Heart left ventricle (tissue), 16 donors: ENCODE measurements at regions of chr2 and their contacts with region 1.

Region 1: DNA sequence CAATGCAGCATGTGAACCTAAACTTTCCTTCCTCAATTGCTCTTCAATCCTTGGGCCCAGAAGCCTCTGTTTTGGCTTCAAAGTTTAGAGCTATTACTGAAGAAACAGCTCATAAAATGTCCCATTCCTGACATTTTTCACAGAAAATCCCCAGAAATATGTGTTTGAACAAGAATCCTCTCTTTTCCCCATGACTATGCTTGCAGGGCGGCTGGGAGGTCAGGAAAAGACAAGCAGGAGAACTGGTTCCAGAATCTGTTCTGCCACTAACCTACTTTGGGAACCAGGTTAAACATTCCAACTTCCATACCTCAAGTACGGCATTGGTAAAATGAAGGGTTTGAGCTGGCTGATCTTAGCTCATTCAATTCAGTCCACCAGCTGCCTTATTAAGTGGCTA is 87.9 kb upstream of the OSR1 start:
- DNase-seq: no peak
- ATAC-seq: no peak
- H3K4me3 ChIP-seq: no peak overlapping the region
- H3K27ac ChIP-seq: no peak overlapping the region
- H3K4me1 ChIP-seq: no peaks in the 10 kb centered on the region
- H3K27me3 ChIP-seq: no peaks in the 10 kb centered on the region
- CTCF ChIP-seq: no peak
- POLR2A ChIP-seq: no peak

Region 2: DNA sequence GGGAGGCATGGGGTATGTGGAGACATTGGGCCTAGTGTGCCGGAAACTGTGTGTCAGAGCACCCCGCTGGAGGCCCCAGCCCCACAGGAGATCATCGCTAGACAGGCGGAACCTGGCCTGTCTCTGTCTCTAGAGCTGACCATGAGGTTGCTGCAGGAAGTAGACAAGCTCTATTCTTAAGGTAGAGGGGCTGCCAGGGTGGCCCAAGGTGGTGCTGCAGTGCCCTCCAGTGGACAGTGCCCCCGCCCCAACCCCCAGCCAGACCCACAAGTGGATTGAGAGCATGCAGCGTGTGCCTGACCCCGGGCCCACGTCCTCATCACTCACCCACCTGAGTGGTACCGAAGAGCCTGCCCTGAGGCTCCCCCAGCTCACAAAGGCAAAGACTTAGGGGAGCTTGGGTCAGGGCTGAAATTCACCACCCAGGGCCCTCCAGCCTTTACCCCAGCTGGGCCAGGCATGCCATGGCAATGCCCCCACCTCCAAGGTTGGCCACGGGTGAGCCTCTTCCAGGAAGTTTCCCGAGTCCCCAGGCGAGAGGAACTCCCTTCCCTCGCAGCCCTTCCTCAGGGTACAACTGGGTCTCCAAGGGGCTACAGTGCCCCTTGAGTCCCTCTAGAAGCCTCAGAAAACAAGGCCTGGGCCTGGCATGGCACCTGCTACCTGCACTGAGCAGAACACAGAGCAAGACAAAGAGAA is 300.4 kb after region 1 on chr2:
- intact Hi-C with region 1: loop called in 1 of 10 experiments (anchors 5 kb)
- DNase-seq: peak in 1 of 5 donors; percentile 52
- ATAC-seq: peak in 3 of 4 donors; percentile 52 to 83 (median 54)
- H3K4me3 ChIP-seq: no peak overlapping the region
- H3K27ac ChIP-seq: peak overlapping the region in 2 of 12 donors; percentile 67 to 71
- H3K4me1 ChIP-seq: peaks cover 0 to 25% (median 3%) of the 10 kb centered on the region in 12 donors
- H3K27me3 ChIP-seq: no peaks in the 10 kb centered on the region
- CTCF ChIP-seq: peak in 11 of 12 donors; percentile 8 to 52 (median 26)
- POLR2A ChIP-seq: no peak